Kidney (tissue), 22 donors: ENCODE measurements at regions of chr15 and their contacts with region 1.

Region 1: DNA sequence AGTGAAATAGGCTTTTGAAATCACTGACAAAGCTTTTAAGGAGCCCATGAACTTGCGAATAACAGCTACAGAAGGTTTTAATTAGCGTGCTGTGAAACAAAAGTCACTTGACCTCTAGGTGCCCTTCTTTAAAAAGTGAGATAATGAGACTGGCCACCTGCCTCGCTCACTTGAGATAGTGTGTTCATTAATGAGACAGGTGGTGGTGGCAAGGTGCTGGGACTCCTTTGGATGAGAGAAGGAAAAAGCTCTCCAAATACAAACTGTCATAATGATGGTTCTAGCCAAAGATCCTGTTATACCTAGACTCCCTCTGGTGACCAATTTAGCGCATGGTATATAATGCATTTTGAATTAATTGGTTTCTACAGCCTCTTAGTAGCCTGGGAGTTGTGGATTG is 22.7 kb upstream of the IREB2 start:
- DNase-seq: peak in 2 of 5 donors; percentile 48 to 69
- H3K4me3 ChIP-seq: no peak overlapping the region
- H3K27ac ChIP-seq: no peak overlapping the region
- H3K4me1 ChIP-seq: no peaks in the 10 kb centered on the region
- H3K27me3 ChIP-seq: no peaks in the 10 kb centered on the region
- CTCF ChIP-seq: no peak

Region 2: DNA sequence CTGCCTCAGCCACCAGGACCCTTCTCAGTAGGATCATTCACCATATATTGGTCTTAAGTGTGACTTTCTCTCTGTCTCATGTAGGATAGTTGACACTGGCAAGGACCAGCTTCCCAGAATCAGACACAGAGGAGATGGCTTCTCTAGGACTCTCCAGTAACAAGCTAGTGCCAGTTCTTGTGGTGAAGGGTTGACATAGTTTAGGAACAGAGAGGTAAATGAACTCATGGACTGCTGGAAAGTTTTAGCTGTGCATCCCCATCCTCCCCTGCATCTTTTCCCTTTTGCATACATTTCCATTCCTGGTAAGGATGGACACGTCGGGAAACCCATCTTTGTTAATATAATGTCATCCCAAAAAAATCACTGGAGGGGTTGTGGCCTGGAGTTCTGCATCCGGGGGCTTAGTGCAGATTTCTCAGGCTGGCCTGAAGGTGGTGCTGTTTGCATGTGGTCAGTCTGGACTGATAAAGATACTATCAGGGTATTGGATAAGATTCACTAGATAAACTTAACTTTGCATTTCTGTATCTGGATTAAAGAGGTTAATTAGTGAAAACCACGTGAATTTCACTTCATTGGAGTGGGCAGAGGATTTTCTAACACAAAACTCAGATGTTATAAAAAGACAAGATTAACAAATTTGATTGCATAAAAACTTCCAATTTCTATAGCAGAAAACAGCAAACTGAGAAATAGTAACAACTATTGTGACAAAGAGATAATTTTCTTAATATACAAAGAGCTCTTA is 448.6 kb before region 1 on chr15:
- intact Hi-C with region 1: loop called (anchors 10 kb)
- DNase-seq: peak in 1 of 5 donors; percentile 46
- H3K4me3 ChIP-seq: no peak overlapping the region
- H3K27ac ChIP-seq: no peak overlapping the region
- H3K4me1 ChIP-seq: no peaks in the 10 kb centered on the region
- H3K27me3 ChIP-seq: no peaks in the 10 kb centered on the region
- CTCF ChIP-seq: peak; percentile 73

Region 3: DNA sequence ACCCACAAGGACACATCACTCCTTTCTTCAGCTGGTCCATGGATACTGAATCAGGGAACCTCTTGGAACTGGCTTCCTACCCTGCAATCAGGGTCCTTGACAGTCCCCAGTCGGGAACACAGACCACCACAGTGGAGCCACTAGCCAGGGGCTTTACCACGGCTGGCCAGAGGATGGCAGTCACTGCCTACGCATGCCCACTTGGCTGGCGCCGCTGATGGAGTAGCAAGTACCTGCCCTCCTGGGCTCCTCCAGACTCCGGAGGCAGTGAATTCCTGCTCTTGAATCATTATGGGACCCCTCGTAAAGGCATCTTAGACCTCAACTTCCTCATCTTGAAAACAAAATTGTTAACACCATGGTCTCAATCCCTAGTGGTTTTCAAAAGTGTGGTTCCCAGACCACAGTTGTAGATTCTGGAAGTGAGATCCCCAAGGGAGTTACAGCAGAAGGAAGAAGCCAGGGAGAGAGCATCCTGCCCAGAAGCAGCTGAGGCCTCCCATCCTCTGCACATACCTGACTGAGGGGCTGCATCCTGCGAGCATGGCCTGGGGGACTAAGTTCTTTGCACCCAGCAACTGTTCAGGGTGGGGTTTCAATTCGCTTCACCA is 106.8 kb before region 1 on chr15:
- intact Hi-C with region 1: loop called (anchors 5 kb)
- DNase-seq: peak in 4 of 5 donors; percentile 84 to 90 (median 88)
- H3K4me3 ChIP-seq: no peak overlapping the region
- H3K27ac ChIP-seq: no peak overlapping the region
- H3K4me1 ChIP-seq: no peaks in the 10 kb centered on the region
- H3K27me3 ChIP-seq: no peaks in the 10 kb centered on the region
- CTCF ChIP-seq: peak; percentile 81

Region 4: GRCh38 chr15:78374436-78375393 is 40.6 kb before region 1 on chr15:
- intact Hi-C with region 1: no loop called
- DNase-seq: no peak
- H3K4me3 ChIP-seq: no peak overlapping the region
- H3K27ac ChIP-seq: peak overlapping the region in 1 of 2 donors; percentile 51
- H3K4me1 ChIP-seq: no peaks in the 10 kb centered on the region
- H3K27me3 ChIP-seq: no peaks in the 10 kb centered on the region
- CTCF ChIP-seq: no peak